OCI-LY7 (cell line): ENCODE measurements at regions of chr22 and their contacts with region 1.

Region 1: GRCh38 chr22:46563381-46564083 is 26.1 kb upstream of the CELSR1 start:
- DNase-seq: peak; percentile 85
- H3K4me3 ChIP-seq: peak overlapping the region; percentile 49
- H3K27ac ChIP-seq: peak overlapping the region; percentile 56
- H3K4me1 ChIP-seq: peaks cover 25% of the 10 kb centered on the region
- CTCF ChIP-seq: peak; percentile 78

Region 2: GRCh38 chr22:45878051-45878781 is 685.3 kb before region 1 on chr22:
- CTCF ChIA-PET with region 1: no interaction called
- POLR2A ChIA-PET with region 1: no interaction called
- intact Hi-C with region 1: no loop called
- DNase-seq: no peak
- H3K4me3 ChIP-seq: no peak overlapping the region
- H3K27ac ChIP-seq: no peak overlapping the region
- H3K4me1 ChIP-seq: no peaks in the 10 kb centered on the region
- CTCF ChIP-seq: no peak

Region 3: DNA sequence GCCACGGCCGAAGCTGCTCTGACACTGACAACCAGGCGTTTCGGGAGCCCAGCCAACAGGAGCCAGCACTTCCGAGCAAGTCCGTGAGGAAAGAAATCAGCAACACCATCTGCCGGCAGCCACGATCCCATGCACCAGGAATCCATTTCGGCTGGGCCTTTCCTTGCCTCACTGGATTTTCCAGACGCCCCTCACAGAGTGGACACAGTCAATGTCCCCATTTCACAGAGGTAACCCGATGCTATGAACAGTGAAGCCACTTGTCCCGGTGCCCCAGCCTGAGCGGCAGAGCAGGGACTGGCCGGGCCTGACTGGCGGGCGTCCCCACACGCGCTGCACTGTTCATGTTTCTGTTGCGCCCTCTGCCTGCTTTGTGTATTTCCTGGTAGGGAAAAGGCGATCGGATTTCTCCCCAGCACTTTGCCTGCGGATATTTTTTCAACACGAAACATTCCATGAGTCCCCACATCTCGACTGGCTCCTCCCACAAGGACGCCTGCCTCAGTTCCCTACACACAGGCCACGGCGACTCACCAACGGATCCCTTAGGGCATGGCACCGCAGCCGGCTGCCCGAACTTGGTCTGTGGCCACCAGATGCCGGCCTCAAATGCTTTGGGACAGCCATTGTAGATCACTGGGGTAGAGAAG is 172.8 kb before region 1 on chr22:
- CTCF ChIA-PET with region 1: no interaction called
- POLR2A ChIA-PET with region 1: no interaction called
- intact Hi-C with region 1: no loop called
- DNase-seq: no peak
- H3K4me3 ChIP-seq: no peak overlapping the region
- H3K27ac ChIP-seq: no peak overlapping the region
- H3K4me1 ChIP-seq: no peaks in the 10 kb centered on the region
- CTCF ChIP-seq: no peak

Region 4: GRCh38 chr22:46592390-46592872 is 28.9 kb after region 1 on chr22:
- CTCF ChIA-PET with region 1: interaction called, 3 read pairs
- POLR2A ChIA-PET with region 1: interaction called, 6 read pairs
- intact Hi-C with region 1: loop called (anchors 1 kb)
- DNase-seq: peak; percentile 82
- H3K4me3 ChIP-seq: peak overlapping the region; percentile 49
- H3K27ac ChIP-seq: peak overlapping the region; percentile 87
- H3K4me1 ChIP-seq: peaks cover 65% of the 10 kb centered on the region
- CTCF ChIP-seq: no peak

Region 5: GRCh38 chr22:46613606-46614021 is 50.1 kb after region 1 on chr22:
- CTCF ChIA-PET with region 1: no interaction called
- POLR2A ChIA-PET with region 1: no interaction called
- intact Hi-C with region 1: loop called (anchors 2 kb)
- DNase-seq: peak; percentile 78
- H3K4me3 ChIP-seq: peak overlapping the region; percentile 71
- H3K27ac ChIP-seq: peak overlapping the region; percentile 82
- H3K4me1 ChIP-seq: peaks cover 28% of the 10 kb centered on the region
- CTCF ChIP-seq: no peak

Region 6: GRCh38 chr22:46674367-46674781 is 110.8 kb after region 1 on chr22:
- CTCF ChIA-PET with region 1: no interaction called
- POLR2A ChIA-PET with region 1: no interaction called
- intact Hi-C with region 1: loop called (anchors 1 kb)
- DNase-seq: peak; percentile 86
- H3K4me3 ChIP-seq: peak overlapping the region; percentile 45
- H3K27ac ChIP-seq: peak overlapping the region; percentile 67
- H3K4me1 ChIP-seq: peaks cover 39% of the 10 kb centered on the region
- CTCF ChIP-seq: no peak

Region 7: DNA sequence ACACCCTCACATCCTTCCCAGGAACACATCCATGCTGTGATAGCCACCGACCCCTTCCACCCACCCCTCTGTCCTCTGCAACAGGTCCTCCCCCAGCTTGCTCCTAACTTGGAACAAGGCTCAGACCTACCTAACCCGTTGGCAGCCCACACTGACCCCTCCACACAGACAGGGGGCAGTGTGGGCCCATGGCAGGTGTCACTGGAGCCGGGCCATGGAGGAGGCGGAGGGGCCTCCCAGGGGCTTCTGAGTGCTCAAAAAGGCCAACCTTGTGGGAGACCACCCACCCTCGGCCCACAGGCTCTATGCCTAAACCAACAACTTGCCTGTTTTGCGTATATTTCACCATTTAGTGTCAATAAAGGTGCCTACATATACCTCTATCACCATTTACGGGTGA is 117.5 kb after region 1 on chr22:
- CTCF ChIA-PET with region 1: no interaction called
- POLR2A ChIA-PET with region 1: no interaction called
- intact Hi-C with region 1: loop called (anchors 1 kb)
- DNase-seq: peak; percentile 40
- H3K4me3 ChIP-seq: no peak overlapping the region
- H3K27ac ChIP-seq: no peak overlapping the region
- H3K4me1 ChIP-seq: peaks cover 32% of the 10 kb centered on the region
- CTCF ChIP-seq: peak; percentile 69

Region 8: DNA sequence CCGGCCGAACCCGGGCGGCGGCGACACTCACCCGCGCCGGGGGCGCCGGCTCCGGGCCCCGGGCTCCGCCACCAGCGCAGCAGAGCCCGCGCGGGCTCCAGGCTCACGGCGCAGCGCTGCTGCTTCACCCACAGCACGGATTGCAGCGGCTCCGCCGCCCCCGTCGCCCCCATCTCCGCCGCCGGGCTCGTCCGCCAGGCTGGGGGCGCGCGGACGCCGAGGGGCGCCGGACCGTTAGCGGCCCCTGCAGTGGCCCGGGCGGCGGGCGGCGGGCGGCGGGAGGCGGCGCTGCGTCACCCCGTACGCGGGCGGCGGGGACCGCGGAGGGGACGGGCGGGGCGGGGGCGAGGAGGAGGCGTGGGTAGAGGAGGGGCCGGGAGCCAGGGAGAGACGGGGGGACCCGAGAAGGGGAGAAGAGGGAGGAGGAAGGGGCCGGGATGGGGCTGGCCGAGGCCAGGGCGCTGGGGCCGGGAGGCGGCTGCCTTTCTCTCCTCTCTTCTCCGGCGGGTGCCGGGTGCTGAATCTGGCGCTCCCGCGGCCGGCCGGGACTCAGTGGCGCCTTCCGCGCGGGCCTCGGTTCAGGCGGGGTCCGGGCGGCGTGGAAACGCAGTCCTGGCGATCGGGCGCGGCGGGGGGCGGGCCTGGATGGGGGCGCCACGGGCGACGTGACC is 174.6 kb after region 1 on chr22 and contains the start of gene CERK:
- CTCF ChIA-PET with region 1: no interaction called
- POLR2A ChIA-PET with region 1: no interaction called
- intact Hi-C with region 1: loop called (anchors 1 kb)
- DNase-seq: peak; percentile 58
- H3K4me3 ChIP-seq: peak within 1 kb of the TSS; percentile 77
- H3K27ac ChIP-seq: peak within 1 kb of the TSS; percentile 56
- H3K4me1 ChIP-seq: peaks cover 46% of the 10 kb centered on the region
- CTCF ChIP-seq: no peak
- total RNA-seq, gene CERK: 47.9 and 48.1 TPM in 2 replicates

Region 9: DNA sequence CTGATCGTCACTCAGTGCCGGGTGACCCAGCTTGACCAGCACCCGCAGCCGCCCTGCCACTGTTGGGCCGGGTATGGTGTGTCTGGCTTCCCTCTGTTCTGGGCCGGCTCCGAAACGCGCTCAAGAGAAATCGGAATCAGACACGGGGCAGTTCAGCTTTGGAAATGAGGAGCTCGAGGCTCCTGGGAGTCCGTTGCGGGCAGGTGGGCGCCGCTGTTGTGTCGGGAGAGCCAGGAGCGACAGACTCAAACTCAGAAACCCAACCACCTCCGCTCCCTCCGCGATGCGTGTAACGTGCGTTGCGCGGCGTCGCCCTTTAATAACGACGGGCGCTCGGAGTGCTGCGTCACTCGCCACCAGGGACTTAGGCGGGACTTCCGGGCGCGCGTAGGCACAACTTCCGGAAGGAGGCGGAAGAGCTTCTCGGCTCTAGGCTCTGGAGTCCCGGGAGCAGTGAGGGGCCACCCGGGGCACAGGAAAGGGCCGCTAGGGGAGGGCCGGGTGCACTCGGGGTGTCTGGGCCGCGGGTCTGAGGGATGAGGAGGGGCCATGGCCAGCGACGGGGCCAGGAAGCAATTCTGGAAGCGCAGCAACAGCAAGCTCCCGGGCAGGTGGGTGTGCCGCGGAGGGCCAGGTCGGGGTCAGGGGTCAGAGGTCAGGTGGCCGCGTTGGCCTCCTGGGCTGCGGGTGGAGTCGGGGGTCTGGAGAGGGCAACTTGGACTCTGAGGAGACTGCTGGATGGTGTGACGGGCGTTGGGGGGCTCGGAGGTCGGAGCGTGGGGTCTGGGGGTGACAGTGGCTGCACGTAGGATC is 198.9 kb after region 1 on chr22 and contains the start of gene TBC1D22A:
- CTCF ChIA-PET with region 1: no interaction called
- POLR2A ChIA-PET with region 1: no interaction called
- intact Hi-C with region 1: loop called (anchors 10 kb)
- DNase-seq: peak; percentile 96
- H3K4me3 ChIP-seq: peak within 1 kb of the TSS; percentile 93
- H3K27ac ChIP-seq: peak within 1 kb of the TSS; percentile 70
- H3K4me1 ChIP-seq: peaks cover 43% of the 10 kb centered on the region
- CTCF ChIP-seq: no peak
- total RNA-seq, gene TBC1D22A: 15.0 and 22.3 TPM in 2 replicates